ENCODE measurements at regions of chr12 and their contacts with region 1.

Region 1: GRCh38 chr12:12724661-12725545 is 7.7 kb downstream of the CDKN1B start:
- DNase-seq: peak; percentile 97 to 99
- H3K4me3 ChIP-seq: peak overlapping the region; percentile 92
- H3K4me3 Mint-ChIP-seq: peak overlapping the region; percentile 100
- H3K27ac Mint-ChIP-seq: peak overlapping the region; percentile 92
- H3K4me1 ChIP-seq: peaks cover 32% of the 10 kb centered on the region
- H3K4me1 Mint-ChIP-seq: peaks cover 19% of the 10 kb centered on the region
- H3K27me3 ChIP-seq: no peaks in the 10 kb centered on the region
- H3K27me3 Mint-ChIP-seq: no peaks in the 10 kb centered on the region
- CTCF ChIP-seq: no peak

Region 2: DNA sequence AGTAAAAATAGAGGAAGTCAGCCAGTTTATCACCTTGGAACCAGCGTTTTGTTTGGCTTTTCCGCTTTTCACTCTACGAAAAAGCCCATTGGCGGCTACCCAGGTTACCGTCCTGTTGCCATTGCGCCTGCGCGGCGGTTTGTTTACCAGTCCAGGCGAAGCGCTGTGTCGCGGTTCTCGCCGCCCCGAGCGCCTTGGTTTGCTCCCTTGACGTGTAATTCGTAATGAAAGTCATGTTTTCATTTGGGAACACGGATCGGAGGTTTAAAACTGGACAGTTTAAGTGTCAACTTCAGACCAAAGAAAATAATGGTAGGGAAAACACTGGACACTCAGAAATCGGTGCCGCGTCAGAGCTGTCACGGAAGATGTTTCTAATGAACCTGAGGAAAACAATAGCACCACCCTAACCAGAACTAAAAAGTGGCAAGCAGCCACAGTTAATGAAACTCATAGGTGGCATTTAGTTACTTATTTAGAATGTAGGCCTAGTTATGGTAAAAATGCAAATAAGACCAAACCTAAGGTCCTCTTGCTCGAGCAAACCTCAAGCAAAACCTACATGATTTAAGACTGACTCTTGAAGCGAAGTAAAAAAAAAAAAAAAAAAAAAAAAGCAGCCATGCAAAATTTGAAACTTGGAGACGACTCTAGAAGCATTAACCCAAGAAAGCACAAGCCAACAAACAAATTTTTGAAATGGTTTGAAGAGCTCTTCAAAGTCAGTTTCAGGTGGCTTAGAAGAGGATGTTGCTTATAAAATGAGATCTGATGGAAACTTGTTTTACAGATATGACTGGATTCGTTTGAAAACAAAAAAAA is 28.1 kb before region 1 on chr12:
- CTCF ChIA-PET with region 1: no interaction called
- POLR2A ChIA-PET with region 1: interaction called, 10 read pairs
- intact Hi-C with region 1: no loop called
- DNase-seq: peak; percentile 91 to 93
- H3K4me3 ChIP-seq: peak overlapping the region; percentile 72
- H3K4me3 Mint-ChIP-seq: peak overlapping the region; percentile 79
- H3K27ac Mint-ChIP-seq: peak overlapping the region; percentile 90
- H3K4me1 ChIP-seq: peaks cover 14% of the 10 kb centered on the region
- H3K4me1 Mint-ChIP-seq: peaks cover 16% of the 10 kb centered on the region
- H3K27me3 ChIP-seq: no peaks in the 10 kb centered on the region
- H3K27me3 Mint-ChIP-seq: no peaks in the 10 kb centered on the region
- CTCF ChIP-seq: no peak

Region 3: GRCh38 chr12:12736759-12737676 is 12.1 kb after region 1 on chr12:
- CTCF ChIA-PET with region 1: interaction called, 33 read pairs
- POLR2A ChIA-PET with region 1: interaction called, 5 read pairs
- intact Hi-C with region 1: no loop called
- DNase-seq: peak in 1 of 2 experiments; percentile 47
- H3K4me3 ChIP-seq: no peak overlapping the region
- H3K4me3 Mint-ChIP-seq: no peak overlapping the region
- H3K27ac Mint-ChIP-seq: peak overlapping the region; percentile 10
- H3K4me1 ChIP-seq: no peaks in the 10 kb centered on the region; the same call in 1 of the 2 replicates
- H3K4me1 Mint-ChIP-seq: peaks cover 25% of the 10 kb centered on the region
- H3K27me3 ChIP-seq: no peaks in the 10 kb centered on the region
- H3K27me3 Mint-ChIP-seq: no peaks in the 10 kb centered on the region
- CTCF ChIP-seq: peak; percentile 66 to 68

Region 4: DNA sequence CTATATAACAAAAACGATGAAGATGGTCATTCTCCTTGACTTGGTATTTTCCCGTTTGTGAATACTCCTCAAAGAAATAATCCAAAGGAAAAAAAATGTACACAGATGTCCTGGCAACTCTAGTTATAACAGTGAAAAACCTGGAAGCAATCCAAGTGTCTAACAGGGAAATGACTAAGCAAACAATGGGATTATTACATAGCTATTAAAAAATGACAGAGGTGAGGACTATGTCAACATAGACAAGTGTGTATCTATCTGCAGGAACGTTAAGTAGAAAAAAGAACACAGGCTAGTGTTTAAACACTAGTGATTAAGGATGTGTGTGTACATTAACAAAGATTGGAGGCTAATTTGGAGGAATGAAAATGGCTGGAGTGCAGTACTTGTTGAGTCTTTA is 54.6 kb after region 1 on chr12:
- CTCF ChIA-PET with region 1: no interaction called
- POLR2A ChIA-PET with region 1: interaction called, 12 read pairs
- intact Hi-C with region 1: loop called (anchors 1 kb)
- DNase-seq: no peak
- H3K4me3 ChIP-seq: no peak overlapping the region
- H3K4me3 Mint-ChIP-seq: no peak overlapping the region
- H3K27ac Mint-ChIP-seq: no peak overlapping the region
- H3K4me1 ChIP-seq: peaks cover 33% of the 10 kb centered on the region
- H3K4me1 Mint-ChIP-seq: peaks cover 40% of the 10 kb centered on the region
- H3K27me3 ChIP-seq: no peaks in the 10 kb centered on the region
- H3K27me3 Mint-ChIP-seq: no peaks in the 10 kb centered on the region
- CTCF ChIP-seq: no peak